HepG2 (cell line): ENCODE measurements at regions of chr16 and their contacts with region 1.

Region 1: GRCh38 chr16:75244844-75245758 is 6.3 kb downstream of the BCAR1 start:
- DNase-seq: peak; percentile 99
- ATAC-seq: peak; percentile 80
- H3K4me3 ChIP-seq: peak overlapping the region; percentile 11 to 63 (median 25); a peak in 5 of 6 replicates
- H3K27ac ChIP-seq: peak overlapping the region; percentile 97
- H3K4me1 ChIP-seq: peaks cover 85% of the 10 kb centered on the region
- H3K27me3 ChIP-seq: no peaks in the 10 kb centered on the region
- CTCF ChIP-seq: peak; percentile 32
- EP300 ChIP-seq: peak in 1 of 2 experiments; percentile 96
- POLR2A ChIP-seq: peak in 1 of 2 experiments; percentile 91; a peak in 2 of 4 replicates
- RAD21 ChIP-seq: peak; percentile 73

Region 2: GRCh38 chr16:75272097-75272551 is 27.0 kb after region 1 on chr16:
- CTCF ChIA-PET with region 1: no interaction called
- POLR2A ChIA-PET with region 1: interaction called, 151 read pairs
- in situ Hi-C with region 1: no loop called
- intact Hi-C with region 1: no loop called
- DNase-seq: peak; percentile 73
- ATAC-seq: peak; percentile 37
- H3K4me3 ChIP-seq: peak overlapping the region; percentile 41 to 59 (median 56)
- H3K27ac ChIP-seq: no peak overlapping the region
- H3K4me1 ChIP-seq: peaks cover 60% of the 10 kb centered on the region
- H3K27me3 ChIP-seq: no peaks in the 10 kb centered on the region
- CTCF ChIP-seq: no peak
- EP300 ChIP-seq: no peak
- POLR2A ChIP-seq: no peak
- RAD21 ChIP-seq: no peak